ENCODE measurements at regions of chr14 and their contacts with region 1.

Region 1: DNA sequence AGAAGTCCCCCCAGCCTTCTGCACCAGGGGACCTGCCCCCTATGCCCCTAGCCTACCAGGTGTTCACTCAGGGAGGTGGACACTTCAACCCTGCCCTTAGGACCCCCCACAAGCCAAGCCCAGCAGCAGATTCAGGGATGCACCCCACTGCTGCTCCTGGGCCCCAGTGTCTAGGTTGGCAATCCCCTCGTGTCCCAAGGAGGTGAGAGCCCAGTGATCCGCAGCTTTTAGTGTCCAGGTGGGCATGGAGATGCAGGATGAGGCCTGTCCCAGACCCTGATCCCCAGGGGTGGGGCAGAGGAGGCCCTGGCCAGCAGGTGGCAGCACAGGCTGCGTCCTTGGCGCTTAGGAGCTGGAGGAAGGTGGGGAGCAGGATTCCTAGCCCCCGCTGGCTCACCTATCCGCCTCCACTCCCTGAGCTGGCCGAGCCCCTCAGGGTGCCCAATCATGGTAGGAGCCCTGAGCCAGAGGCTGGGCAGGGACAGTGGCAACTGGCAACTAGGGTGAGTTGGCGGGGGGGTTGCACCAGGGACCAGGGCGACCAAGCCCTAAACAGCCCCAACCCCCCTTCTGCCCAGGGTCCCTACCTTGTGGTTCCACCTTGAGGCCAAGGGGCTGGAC is 4.1 kb downstream of the CKB start:
- DNase-seq: peak; percentile 54
- H3K4me3 ChIP-seq: no peak overlapping the region
- H3K27ac ChIP-seq: peak overlapping the region; percentile 68 to 92
- H3K4me1 ChIP-seq: peaks cover 24% of the 10 kb centered on the region
- H3K27me3 ChIP-seq: no peaks in the 10 kb centered on the region
- CTCF ChIP-seq: peak; percentile 94 to 96 (median 95)
- POLR2A ChIP-seq: no peak

Region 2: GRCh38 chr14:103546652-103547454 is 28.3 kb after region 1 on chr14:
- intact Hi-C with region 1: loop called (anchors 1 kb)
- DNase-seq: peak; percentile 55
- H3K4me3 ChIP-seq: no peak overlapping the region
- H3K27ac ChIP-seq: no peak overlapping the region
- H3K4me1 ChIP-seq: peaks cover 22% of the 10 kb centered on the region
- H3K27me3 ChIP-seq: no peaks in the 10 kb centered on the region
- CTCF ChIP-seq: peak; percentile 89 to 96 (median 92)
- POLR2A ChIP-seq: no peak

Region 3: GRCh38 chr14:103562429-103563225 is 44.1 kb after region 1 on chr14 and contains the starts of genes BAG5 and COA8:
- intact Hi-C with region 1: no loop called
- DNase-seq: peak; percentile 73
- H3K4me3 ChIP-seq: peak within 1 kb of the TSS; percentile 88 to 96
- H3K27ac ChIP-seq: peak within 1 kb of the TSS; percentile 84 to 97
- H3K4me1 ChIP-seq: peaks cover 14% of the 10 kb centered on the region
- H3K27me3 ChIP-seq: no peaks in the 10 kb centered on the region
- CTCF ChIP-seq: peak in 2 of 4 experiments; percentile 45 to 50
- POLR2A ChIP-seq: peak; percentile 56
- total RNA-seq, gene BAG5: 31.2 to 33.3 TPM
- total RNA-seq, gene COA8: 24.3 to 24.9 TPM

Region 4: DNA sequence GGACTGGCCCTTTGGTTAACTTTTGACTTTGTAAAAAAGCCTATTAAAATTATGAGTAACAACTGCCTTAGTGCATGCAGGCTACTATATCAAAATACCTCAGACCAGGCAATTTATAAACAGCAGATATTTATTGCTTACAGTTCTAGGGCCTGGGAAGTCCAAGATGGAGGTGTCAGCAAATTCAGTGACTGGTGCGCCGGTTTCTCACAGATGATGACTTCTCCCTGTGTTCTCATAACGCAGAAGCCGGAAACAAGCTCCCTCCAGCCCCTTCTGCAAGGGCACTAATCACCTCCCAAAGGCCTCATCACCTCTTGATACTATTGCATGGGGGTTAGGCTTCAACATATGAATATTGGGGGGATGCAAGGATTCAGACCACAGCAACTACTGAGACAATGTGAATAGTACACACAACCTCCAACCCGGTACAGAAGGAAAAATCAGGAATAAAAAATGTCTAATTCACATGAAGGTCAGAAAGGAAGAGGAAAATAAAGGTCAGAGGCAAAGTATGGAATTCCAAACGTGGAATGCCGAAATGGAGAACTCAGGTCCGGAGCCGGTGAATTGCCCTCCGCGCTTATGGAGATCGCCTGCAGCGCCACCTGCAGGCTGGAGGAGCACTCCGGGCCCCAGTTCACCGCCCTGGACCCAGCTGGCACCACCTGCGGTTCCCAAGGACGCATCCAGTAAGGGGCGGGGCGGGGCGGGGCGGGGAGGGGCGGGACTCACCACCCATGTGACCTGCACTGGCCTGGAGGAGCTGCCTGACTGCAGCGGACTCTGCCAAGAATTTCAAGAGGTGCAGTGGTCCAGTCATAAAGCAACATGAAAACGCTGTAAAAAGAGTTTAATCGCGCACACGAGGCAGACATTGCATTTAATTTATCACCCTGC is 823.3 kb after region 1 on chr14:
- intact Hi-C with region 1: no loop called
- DNase-seq: no peak
- H3K4me3 ChIP-seq: no peak overlapping the region
- H3K27ac ChIP-seq: no peak overlapping the region
- H3K4me1 ChIP-seq: peaks cover 14% of the 10 kb centered on the region
- H3K27me3 ChIP-seq: no peaks in the 10 kb centered on the region
- CTCF ChIP-seq: peak in 1 of 4 experiments; percentile 49
- POLR2A ChIP-seq: no peak